ENCODE measurements at regions of chr11 and their contacts with region 1.

Region 1: GRCh38 chr11:102341844-102342318 is 5.1 kb upstream of the BIRC2 start:
- DNase-seq: peak in 1 of 2 experiments; percentile 75
- H3K4me3 ChIP-seq: no peak overlapping the region
- H3K27ac ChIP-seq: no peak overlapping the region
- H3K4me1 ChIP-seq: peaks cover 0 to 4% (median 1%) of the 10 kb centered on the region in 4 experiments; a peak in 2 of 7 replicates
- H3K27me3 ChIP-seq: no peaks in the 10 kb centered on the region
- CTCF ChIP-seq: peak; percentile 35 to 92 (median 81)
- EP300 ChIP-seq: no peak
- POLR2A ChIP-seq: no peak
- RAD21 ChIP-seq: peak; percentile 89 to 91

Region 2: GRCh38 chr11:102287964-102288724 is 53.7 kb before region 1 on chr11:
- CTCF ChIA-PET with region 1: interaction called, 12 read pairs
- POLR2A ChIA-PET with region 1: no interaction called
- DNase-seq: no peak
- H3K4me3 ChIP-seq: no peak overlapping the region
- H3K27ac ChIP-seq: no peak overlapping the region
- H3K4me1 ChIP-seq: peaks cover 0 to 5% (median 0%) of the 10 kb centered on the region in 4 experiments; a peak in 2 of 7 replicates
- H3K27me3 ChIP-seq: no peaks in the 10 kb centered on the region
- CTCF ChIP-seq: peak in 2 of 3 experiments; percentile 49 to 76; a peak in 3 of 4 replicates
- EP300 ChIP-seq: no peak
- POLR2A ChIP-seq: no peak
- RAD21 ChIP-seq: peak; percentile 75 to 79

Region 3: DNA sequence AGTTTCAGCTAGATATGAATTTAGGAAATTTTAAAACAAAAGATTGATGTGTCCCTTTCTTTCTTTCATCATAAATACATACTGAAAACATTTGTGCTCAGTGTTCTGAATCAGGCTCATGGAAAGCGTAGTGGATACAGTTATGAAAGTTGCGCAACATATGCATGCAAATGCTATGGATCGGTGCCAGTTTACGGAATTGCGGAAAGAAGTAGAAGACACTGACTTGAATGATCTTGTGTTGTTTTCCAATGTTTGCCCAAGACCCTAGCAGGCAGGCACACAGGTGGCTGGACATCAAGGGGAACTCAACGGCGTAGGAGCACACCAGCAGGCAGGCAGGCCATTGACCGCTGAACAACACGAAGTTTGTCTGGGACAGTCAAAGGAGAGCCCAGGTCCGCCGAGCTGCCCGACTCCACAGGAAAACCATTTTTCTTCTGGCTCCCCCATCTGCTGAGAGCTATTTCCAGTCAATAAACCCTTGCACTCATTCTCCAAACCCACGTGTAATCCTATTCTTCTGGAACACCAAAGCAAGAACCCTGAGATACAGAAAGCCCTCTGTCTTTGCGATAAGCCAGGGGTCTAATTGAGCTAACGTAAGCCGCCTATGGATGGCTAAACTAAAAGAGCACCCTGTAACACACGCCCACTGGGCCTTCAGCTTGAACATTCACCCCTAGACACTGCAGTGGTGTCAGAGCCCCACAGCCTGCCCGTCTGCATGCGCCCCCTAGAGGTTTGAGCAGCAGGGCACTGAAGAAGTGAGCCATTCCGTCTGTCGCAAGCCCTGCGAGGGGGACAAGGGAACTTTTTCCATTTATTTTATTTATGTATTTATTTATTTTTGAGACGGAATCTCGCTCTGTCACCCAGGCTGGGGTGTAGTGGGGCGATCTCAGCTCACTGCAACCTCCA is 32.0 kb before region 1 on chr11:
- CTCF ChIA-PET with region 1: interaction called, 11 read pairs
- POLR2A ChIA-PET with region 1: no interaction called
- DNase-seq: peak; percentile 17 to 79
- H3K4me3 ChIP-seq: no peak overlapping the region
- H3K27ac ChIP-seq: no peak overlapping the region
- H3K4me1 ChIP-seq: no peaks in the 10 kb centered on the region; a peak in 1 of 7 replicates
- H3K27me3 ChIP-seq: no peaks in the 10 kb centered on the region
- CTCF ChIP-seq: peak; percentile 72 to 88 (median 80)
- EP300 ChIP-seq: no peak
- POLR2A ChIP-seq: no peak
- RAD21 ChIP-seq: peak; percentile 54 to 63

Region 4: DNA sequence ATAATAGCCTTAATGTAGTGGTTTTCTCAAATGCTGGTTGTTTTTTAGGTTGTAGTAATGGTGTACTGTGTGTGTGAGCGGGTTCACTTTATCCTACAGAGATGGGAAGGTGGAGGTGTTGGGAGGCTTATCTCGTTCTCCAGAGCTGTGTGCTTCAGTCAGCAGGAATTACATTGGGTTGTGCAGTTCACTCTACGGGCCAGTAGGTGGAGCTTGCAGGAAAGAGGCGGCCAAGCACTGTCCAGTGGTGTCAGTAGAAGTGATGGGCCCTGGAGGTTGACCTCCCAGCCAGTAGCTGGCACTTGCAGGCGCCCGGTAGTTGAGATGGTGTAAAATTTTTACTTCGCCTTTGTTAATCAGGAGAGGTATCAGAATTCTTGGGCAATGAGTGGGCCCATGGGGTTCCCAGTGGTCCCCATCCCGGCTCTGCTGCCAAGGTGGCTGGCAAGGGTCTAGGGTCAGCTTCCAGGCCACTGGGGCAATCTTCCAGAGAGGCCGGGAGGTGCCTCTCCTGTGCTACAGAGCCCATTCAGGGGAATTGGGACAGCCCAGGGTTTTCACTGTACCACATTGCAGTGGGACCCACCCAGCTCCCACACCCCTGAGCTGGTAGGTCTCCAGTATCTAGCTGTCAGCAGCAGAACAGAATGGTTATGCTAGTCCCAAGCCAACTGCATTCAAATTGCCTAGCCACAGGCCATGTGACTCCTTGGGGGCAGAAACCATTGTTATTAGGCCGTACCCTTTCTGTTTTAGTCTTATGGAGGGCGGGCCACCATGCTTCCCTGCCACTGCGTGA is 49.0 kb after region 1 on chr11:
- CTCF ChIA-PET with region 1: interaction called, 11 read pairs
- POLR2A ChIA-PET with region 1: no interaction called
- DNase-seq: peak; percentile 43 to 69
- H3K4me3 ChIP-seq: no peak overlapping the region
- H3K27ac ChIP-seq: no peak overlapping the region
- H3K4me1 ChIP-seq: no peaks in the 10 kb centered on the region
- H3K27me3 ChIP-seq: no peaks in the 10 kb centered on the region
- CTCF ChIP-seq: peak; percentile 86 to 93 (median 92)
- EP300 ChIP-seq: no peak
- POLR2A ChIP-seq: no peak
- RAD21 ChIP-seq: peak; percentile 72 to 80

Region 5: GRCh38 chr11:102495161-102496042 is 153.5 kb after region 1 on chr11:
- CTCF ChIA-PET with region 1: interaction called, 20 read pairs
- POLR2A ChIA-PET with region 1: no interaction called
- DNase-seq: peak; percentile 9 to 63
- H3K4me3 ChIP-seq: peak overlapping the region in 1 of 4 experiments; percentile 41; a peak in 2 of 8 replicates
- H3K27ac ChIP-seq: no peak overlapping the region
- H3K4me1 ChIP-seq: peaks cover 0 to 6% (median 2%) of the 10 kb centered on the region in 4 experiments; a peak in 2 of 7 replicates
- H3K27me3 ChIP-seq: no peaks in the 10 kb centered on the region
- CTCF ChIP-seq: peak in 2 of 3 experiments; percentile 60 to 68; a peak in 2 of 4 replicates
- EP300 ChIP-seq: no peak
- POLR2A ChIP-seq: no peak
- RAD21 ChIP-seq: peak; percentile 83 to 87

Region 6: DNA sequence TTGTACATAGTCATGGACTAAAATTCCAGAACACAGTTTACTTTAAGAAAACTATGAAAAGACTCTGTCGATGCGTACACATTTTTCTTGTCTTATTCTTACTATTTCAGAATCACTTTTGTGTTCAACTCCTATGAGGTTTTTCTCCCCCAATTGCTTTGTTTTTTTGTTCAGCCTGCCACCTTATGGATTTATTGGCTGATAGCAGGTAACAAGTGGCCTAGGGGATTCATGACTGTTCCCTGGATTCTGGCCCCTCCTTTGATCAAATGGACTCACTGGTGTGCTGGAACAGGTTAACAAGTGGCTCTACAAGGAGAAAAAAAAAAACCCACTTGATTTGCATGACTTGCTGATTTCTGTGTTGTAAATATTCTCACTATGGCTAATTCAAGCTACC is 272.6 kb after region 1 on chr11:
- CTCF ChIA-PET with region 1: interaction called, 17 read pairs
- POLR2A ChIA-PET with region 1: no interaction called
- DNase-seq: no peak
- H3K4me3 ChIP-seq: no peak overlapping the region
- H3K27ac ChIP-seq: no peak overlapping the region
- H3K4me1 ChIP-seq: peaks cover 4 to 18% (median 12%) of the 10 kb centered on the region in 4 experiments
- H3K27me3 ChIP-seq: no peaks in the 10 kb centered on the region
- CTCF ChIP-seq: no peak
- EP300 ChIP-seq: no peak
- POLR2A ChIP-seq: no peak
- RAD21 ChIP-seq: peak; percentile 14 to 27; a peak in 2 of 4 replicates

Measured in H1 (cell line).